K562 (cell line): ENCODE measurements at regions of chr3 and their contacts with region 1.

Region 1: DNA sequence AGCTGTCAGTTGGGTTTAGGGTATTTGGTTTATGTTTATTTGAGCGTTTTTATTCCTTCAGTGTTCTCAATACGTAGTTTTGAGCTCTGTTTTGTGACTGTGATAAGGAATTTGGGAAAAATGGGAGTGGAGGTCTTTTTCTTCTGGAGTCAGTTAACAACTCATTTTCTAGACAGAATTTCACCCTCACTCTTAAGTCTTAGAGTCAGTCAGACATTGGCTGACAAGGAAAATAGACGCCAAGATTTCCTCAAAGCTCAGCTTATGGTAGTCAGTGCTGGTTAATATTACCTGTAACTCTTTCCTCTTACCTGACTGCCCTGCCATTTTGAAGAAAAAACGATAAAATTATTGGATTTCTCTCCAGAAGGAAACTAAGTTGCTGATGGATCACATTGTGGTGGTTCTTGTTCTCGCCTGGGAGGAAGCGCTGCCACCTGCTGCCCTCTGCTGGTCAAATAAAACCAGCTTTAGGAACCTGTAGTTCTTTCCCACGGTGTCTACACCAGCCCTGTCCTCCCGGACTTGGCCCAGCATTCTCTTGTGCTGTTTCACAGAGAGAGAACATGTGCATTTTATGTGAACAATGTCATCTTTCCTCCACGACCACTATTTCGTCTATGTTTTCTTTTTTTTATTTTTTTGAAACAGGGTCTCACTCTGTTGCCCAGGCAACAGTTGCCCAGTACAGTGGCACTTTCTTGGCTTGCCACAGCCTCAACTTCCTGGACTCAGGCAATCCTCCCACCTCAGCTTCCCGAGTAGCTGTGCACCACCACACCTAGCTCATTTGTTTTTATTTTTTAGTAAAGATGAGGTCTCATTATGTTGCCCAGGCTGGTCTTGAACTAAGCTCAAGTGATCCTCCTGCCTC is 41.4 kb upstream of the UMPS start:
- DNase-seq: peak; percentile 80 to 86 (median 80)
- ATAC-seq: peak; percentile 97
- H3K4me3 ChIP-seq: no peak overlapping the region
- H3K27ac ChIP-seq: no peak overlapping the region
- H3K4me1 ChIP-seq: no peaks in the 10 kb centered on the region; a peak in 1 of 5 replicates
- H3K27me3 ChIP-seq: no peaks in the 10 kb centered on the region
- CTCF ChIP-seq: peak; percentile 79 to 88 (median 83)
- EP300 ChIP-seq: no peak
- POLR2A ChIP-seq: no peak
- RAD21 ChIP-seq: peak; percentile 86 to 93

Region 2: DNA sequence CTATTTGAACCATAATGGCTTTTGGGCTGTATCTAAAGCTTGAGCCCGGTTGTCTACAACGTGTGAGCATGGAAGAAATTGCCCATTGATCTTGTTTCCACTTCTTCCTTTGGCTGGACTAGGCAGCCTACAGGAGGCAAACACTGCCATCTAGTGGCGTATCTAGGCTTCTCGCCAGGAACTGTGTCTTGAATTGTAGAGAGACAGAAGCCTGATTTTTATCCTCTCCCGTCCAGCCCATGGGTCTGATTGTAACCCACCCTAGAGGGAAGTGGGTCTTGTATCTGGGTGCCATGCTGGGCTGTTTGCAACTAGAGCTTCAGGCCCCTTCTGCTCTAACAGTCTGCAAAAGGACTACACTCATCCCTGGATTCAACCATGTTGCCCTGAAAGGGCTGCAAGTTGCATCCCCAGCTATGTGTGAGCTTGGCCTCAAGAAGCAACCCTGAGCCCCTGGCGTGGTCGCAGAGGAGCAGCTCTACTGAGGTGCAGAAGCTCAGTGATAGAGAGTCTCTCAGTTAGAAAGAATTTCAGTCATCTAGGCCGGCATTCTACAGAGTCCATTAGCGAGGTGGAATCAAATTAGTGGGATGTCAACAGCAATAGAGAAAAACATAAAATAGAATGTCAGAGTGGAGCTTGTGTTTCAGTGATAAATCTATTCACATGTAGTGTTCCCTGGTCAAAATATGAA is 128.8 kb before region 1 on chr3:
- CTCF ChIA-PET with region 1: interaction called, 38 read pairs
- POLR2A ChIA-PET with region 1: no interaction called
- in situ Hi-C with region 1: loop called (anchors 5 kb)
- intact Hi-C with region 1: loop called (anchors 1 kb)
- DNase-seq: peak; percentile 62 to 77 (median 66)
- ATAC-seq: peak; percentile 91
- H3K4me3 ChIP-seq: no peak overlapping the region
- H3K27ac ChIP-seq: no peak overlapping the region
- H3K4me1 ChIP-seq: peaks cover 0 to 5% of the 10 kb centered on the region in 2 experiments; a peak in 3 of 5 replicates
- H3K27me3 ChIP-seq: peaks cover 0 to 9% of the 10 kb centered on the region in 2 experiments; a peak in 1 of 5 replicates
- CTCF ChIP-seq: peak; percentile 73 to 79 (median 77)
- EP300 ChIP-seq: no peak
- POLR2A ChIP-seq: no peak
- RAD21 ChIP-seq: peak; percentile 42 to 67

Region 3: DNA sequence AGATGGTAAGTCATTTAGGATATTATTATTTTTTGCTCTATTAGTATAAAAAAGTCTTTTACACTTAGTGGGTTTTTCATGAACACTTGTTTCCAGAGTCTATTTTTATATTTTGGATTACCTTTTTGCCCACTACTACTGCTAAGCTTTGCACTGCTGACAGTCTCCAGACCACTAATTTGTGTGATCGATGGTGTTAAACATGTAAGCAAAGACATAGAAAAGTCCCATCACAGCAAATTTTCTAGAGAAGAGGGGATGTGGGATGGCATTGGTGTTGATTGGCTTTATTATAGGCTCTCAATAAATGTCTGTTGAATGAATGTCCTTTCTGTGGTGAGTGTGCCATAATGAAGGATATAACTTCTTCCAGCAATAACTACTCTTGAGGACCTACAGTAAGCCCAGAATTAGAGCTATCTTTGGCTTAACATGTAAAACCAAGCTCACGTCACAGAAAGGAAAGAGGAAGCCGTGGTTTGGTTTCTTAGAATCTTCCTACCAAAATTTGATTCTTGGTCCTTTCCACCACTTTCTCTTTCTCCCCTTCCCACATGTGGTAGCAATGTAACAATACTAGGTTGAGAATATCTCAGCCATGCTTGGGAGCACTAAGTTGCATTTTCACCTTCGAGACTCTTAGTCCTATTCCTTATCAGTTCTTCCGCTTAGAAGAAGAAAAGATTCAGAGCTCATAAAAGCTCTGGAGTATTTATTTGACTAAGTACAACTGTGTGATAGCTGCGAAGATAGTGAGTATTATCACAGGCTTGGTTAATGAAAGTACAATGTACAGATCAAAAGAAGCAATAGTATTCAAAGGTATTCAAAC is 49.2 kb before region 1 on chr3:
- CTCF ChIA-PET with region 1: no interaction called
- POLR2A ChIA-PET with region 1: no interaction called
- in situ Hi-C with region 1: no loop called
- intact Hi-C with region 1: loop called (anchors 5 kb)
- DNase-seq: no peak
- ATAC-seq: no peak
- H3K4me3 ChIP-seq: no peak overlapping the region
- H3K27ac ChIP-seq: peak overlapping the region; percentile 23; the same call in 1 of the 3 replicates
- H3K4me1 ChIP-seq: peaks cover 0 to 34% of the 10 kb centered on the region in 2 experiments; a peak in 3 of 5 replicates
- H3K27me3 ChIP-seq: no peaks in the 10 kb centered on the region
- CTCF ChIP-seq: no peak
- EP300 ChIP-seq: no peak
- POLR2A ChIP-seq: no peak
- RAD21 ChIP-seq: no peak